Heart right ventricle (tissue), 16 donors: ENCODE measurements at regions of chrX and their contacts with region 1.

Region 1: DNA sequence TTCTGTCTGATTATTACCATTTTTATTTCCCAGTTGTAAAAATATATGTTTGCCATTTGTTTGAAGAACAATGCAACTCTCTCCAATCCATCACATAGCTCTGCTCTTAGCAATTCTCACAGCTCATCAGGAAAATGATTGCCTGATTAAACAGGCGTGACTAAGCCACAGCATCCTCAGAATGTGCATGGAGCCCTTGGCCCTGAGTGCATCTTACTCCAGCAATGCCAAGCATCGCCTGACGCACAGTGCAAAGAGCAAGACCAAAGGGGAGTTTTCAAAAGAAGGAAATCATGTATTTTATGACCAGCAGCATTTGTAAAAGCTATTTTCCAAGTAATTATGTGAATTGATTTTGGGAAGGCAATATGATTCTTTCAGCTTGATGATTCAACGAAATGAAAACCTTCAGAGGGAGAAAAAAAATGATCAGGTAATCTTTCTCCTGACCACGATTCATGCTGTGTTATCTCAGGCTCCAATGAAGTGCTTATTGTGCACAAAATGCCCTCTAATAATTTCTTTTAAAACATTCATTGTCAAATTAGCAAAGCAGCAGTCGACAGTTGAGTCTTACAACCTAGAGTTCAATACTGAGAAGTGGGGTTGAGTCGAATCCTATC is 138.0 kb upstream of the FAM9B start:
- DNase-seq: no peak
- ATAC-seq: no peak
- H3K4me3 ChIP-seq: no peak overlapping the region
- H3K27ac ChIP-seq: no peak overlapping the region
- H3K4me1 ChIP-seq: no peaks in the 10 kb centered on the region
- H3K27me3 ChIP-seq: peaks cover 0 to 6% (median 0%) of the 10 kb centered on the region in 7 donors
- CTCF ChIP-seq: no peak

Region 2: GRCh38 chrX:9062641-9063040 is 109.3 kb before region 1 on chrX:
- intact Hi-C with region 1: no loop called
- DNase-seq: no peak
- ATAC-seq: no peak
- H3K4me3 ChIP-seq: no peak overlapping the region
- H3K27ac ChIP-seq: no peak overlapping the region
- H3K4me1 ChIP-seq: no peaks in the 10 kb centered on the region
- H3K27me3 ChIP-seq: no peaks in the 10 kb centered on the region
- CTCF ChIP-seq: no peak

Region 3: GRCh38 chrX:9127986-9128385 is 44.0 kb before region 1 on chrX:
- intact Hi-C with region 1: loop called in 1 of 10 experiments (anchors 1 kb)
- DNase-seq: no peak
- ATAC-seq: no peak
- H3K4me3 ChIP-seq: no peak overlapping the region
- H3K27ac ChIP-seq: no peak overlapping the region
- H3K4me1 ChIP-seq: no peaks in the 10 kb centered on the region
- H3K27me3 ChIP-seq: peaks cover 0 to 3% (median 0%) of the 10 kb centered on the region in 7 donors
- CTCF ChIP-seq: no peak

Region 4: GRCh38 chrX:9327748-9328147 is 155.8 kb after region 1 on chrX:
- intact Hi-C with region 1: no loop called
- DNase-seq: no peak
- ATAC-seq: no peak
- H3K4me3 ChIP-seq: no peak overlapping the region
- H3K27ac ChIP-seq: no peak overlapping the region
- H3K4me1 ChIP-seq: no peaks in the 10 kb centered on the region
- H3K27me3 ChIP-seq: peaks cover 0 to 43% (median 0%) of the 10 kb centered on the region in 7 donors
- CTCF ChIP-seq: no peak